Posterior vena cava (tissue), 2 donors: ENCODE measurements at regions of chr4 and their contacts with region 1.

Region 1: GRCh38 chr4:184168406-184169019 is 49.2 kb downstream of the ENPP6 start:
- DNase-seq: peak; percentile 94

Region 2: GRCh38 chr4:183838987-183839712 is 329.4 kb before region 1 on chr4:
- intact Hi-C with region 1: loop called (anchors 2 to 5 kb)
- DNase-seq: no peak

Region 3: DNA sequence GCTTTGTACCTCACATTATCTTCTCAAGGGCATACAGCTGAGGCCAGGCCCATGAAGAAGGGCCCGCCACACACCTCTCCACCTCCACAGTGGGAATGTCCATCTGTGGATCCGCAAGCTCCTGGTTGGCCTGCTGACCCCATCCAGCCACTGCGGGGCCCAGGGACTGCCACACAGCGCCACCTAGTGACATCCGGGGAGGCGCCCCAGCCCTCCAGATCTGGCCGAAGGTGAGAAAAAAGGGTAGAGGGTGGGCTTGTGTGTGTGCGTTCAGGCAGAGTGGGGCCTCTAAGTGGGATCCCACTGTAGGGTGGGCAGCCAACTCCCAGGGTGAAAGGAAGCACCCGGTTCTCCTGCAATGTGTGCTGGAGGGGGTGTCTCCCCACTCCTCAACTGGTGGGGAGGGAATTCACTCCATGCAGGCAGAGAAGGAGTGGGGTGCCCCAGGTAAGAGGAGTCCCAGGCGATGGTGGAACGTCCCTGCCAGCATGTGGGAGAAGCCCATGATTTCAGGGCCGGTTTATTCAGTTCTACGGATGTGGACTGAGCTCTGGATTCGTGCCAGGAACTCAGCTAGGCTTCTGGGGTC is 68.1 kb before region 1 on chr4:
- intact Hi-C with region 1: loop called (anchors 2 to 10 kb)
- DNase-seq: no peak